HCT116 (cell line): ENCODE measurements at regions of chr7 and their contacts with region 1.

Region 1: DNA sequence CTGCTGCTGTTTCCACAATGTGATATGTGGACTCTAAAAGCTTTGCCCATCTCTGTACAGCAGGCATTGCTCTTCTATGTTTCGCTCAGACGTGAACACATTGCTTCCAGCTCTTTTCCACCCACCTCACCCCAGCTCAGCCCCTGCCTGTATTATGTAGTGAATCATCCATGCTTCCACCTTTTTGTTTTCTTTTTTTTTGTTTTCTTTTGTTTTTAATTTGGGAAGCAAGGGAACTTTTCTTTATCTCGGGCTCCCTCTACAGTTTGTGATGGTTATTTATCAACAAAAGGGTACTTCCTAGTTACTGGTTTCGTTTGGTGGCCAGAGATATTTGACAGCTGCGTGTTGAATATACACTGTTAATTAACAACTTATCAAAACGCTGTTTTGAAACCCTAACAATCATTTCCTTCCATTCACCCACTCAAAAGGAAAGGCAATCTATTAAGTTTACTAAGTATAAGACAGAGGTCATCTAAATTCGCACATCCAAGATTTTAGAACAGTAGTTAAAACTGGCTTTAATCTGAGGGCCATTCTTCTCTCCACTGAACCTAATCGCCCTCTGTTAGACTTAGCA is 127.9 kb upstream of the STK17A start:
- DNase-seq: peak; percentile 19
- ATAC-seq: peak; percentile 81
- H3K4me3 ChIP-seq: no peak overlapping the region
- H3K27ac ChIP-seq: no peak overlapping the region
- H3K4me1 ChIP-seq: peaks cover 0 to 5% of the 10 kb centered on the region in 2 experiments; a peak in 2 of 4 replicates
- H3K27me3 ChIP-seq: no peaks in the 10 kb centered on the region
- CTCF ChIP-seq: peak; percentile 49 to 71 (median 68); a peak in 5 of 6 replicates
- POLR2A ChIP-seq: no peak
- RAD21 ChIP-seq: peak; percentile 73

Region 2: GRCh38 chr7:43439631-43440401 is 15.2 kb before region 1 on chr7:
- CTCF ChIA-PET with region 1: interaction called, 14 read pairs
- POLR2A ChIA-PET with region 1: no interaction called
- RAD21 ChIA-PET with region 1: no interaction called
- intact Hi-C with region 1: no loop called
- DNase-seq: peak; percentile 38
- ATAC-seq: peak; percentile 99
- H3K4me3 ChIP-seq: no peak overlapping the region
- H3K27ac ChIP-seq: no peak overlapping the region
- H3K4me1 ChIP-seq: no peaks in the 10 kb centered on the region
- H3K27me3 ChIP-seq: no peaks in the 10 kb centered on the region
- CTCF ChIP-seq: peak; percentile 60 to 94 (median 91)
- POLR2A ChIP-seq: no peak
- RAD21 ChIP-seq: peak; percentile 69

Region 3: GRCh38 chr7:43700059-43700501 is 245.1 kb after region 1 on chr7:
- CTCF ChIA-PET with region 1: interaction called, 16 read pairs
- POLR2A ChIA-PET with region 1: no interaction called
- RAD21 ChIA-PET with region 1: interaction called in 1 of 2 experiments, 3 read pairs
- intact Hi-C with region 1: loop called (anchors 5 kb)
- DNase-seq: peak; percentile 31
- ATAC-seq: peak; percentile 60
- H3K4me3 ChIP-seq: no peak overlapping the region
- H3K27ac ChIP-seq: no peak overlapping the region
- H3K4me1 ChIP-seq: peaks cover 6 to 14% of the 10 kb centered on the region in 2 experiments
- H3K27me3 ChIP-seq: no peaks in the 10 kb centered on the region
- CTCF ChIP-seq: peak; percentile 57 to 95 (median 68)
- POLR2A ChIP-seq: no peak
- RAD21 ChIP-seq: peak; percentile 91

Region 4: GRCh38 chr7:43721193-43721806 is 266.3 kb after region 1 on chr7:
- CTCF ChIA-PET with region 1: no interaction called
- POLR2A ChIA-PET with region 1: no interaction called
- RAD21 ChIA-PET with region 1: no interaction called
- intact Hi-C with region 1: loop called (anchors 5 kb)
- DNase-seq: no peak
- ATAC-seq: no peak
- H3K4me3 ChIP-seq: no peak overlapping the region
- H3K27ac ChIP-seq: no peak overlapping the region
- H3K4me1 ChIP-seq: no peaks in the 10 kb centered on the region
- H3K27me3 ChIP-seq: no peaks in the 10 kb centered on the region
- CTCF ChIP-seq: peak; percentile 39 to 79 (median 78); a peak in 5 of 6 replicates
- POLR2A ChIP-seq: no peak
- RAD21 ChIP-seq: peak; percentile 63